Prostate gland (tissue), 2 donors: ENCODE measurements at regions of chr5 and their contacts with region 1.

Region 1: GRCh38 chr5:57408714-57409113 is 73.9 kb downstream of the ACTBL2 start:
- DNase-seq: no peak
- H3K4me3 ChIP-seq: no peak overlapping the region
- H3K27ac ChIP-seq: peak overlapping the region in 1 of 2 donors; percentile 17
- H3K4me1 ChIP-seq: no peaks in the 10 kb centered on the region
- H3K27me3 ChIP-seq: no peaks in the 10 kb centered on the region
- CTCF ChIP-seq: no peak
- POLR2A ChIP-seq: no peak

Region 2: GRCh38 chr5:57199866-57200265 is 208.8 kb before region 1 on chr5:
- intact Hi-C with region 1: no loop called
- DNase-seq: no peak
- H3K4me3 ChIP-seq: no peak overlapping the region
- H3K27ac ChIP-seq: no peak overlapping the region
- H3K4me1 ChIP-seq: no peaks in the 10 kb centered on the region
- H3K27me3 ChIP-seq: no peaks in the 10 kb centered on the region
- CTCF ChIP-seq: no peak
- POLR2A ChIP-seq: no peak

Region 3: GRCh38 chr5:57450991-57451876 is 42.5 kb after region 1 on chr5:
- intact Hi-C with region 1: loop called (anchors 5 kb)
- DNase-seq: no peak
- H3K4me3 ChIP-seq: no peak overlapping the region
- H3K27ac ChIP-seq: peak overlapping the region; percentile 29 to 31
- H3K4me1 ChIP-seq: no peaks in the 10 kb centered on the region
- H3K27me3 ChIP-seq: no peaks in the 10 kb centered on the region
- CTCF ChIP-seq: no peak
- POLR2A ChIP-seq: no peak